Naive thymus-derived CD4-positive, alpha-beta T cell (primary cell): ENCODE measurements at regions of chr6 and their contacts with region 1.

Region 1: GRCh38 chr6:7615611-7616383 is 25.8 kb downstream of the SNRNP48 start:
- DNase-seq: peak in 7 of 9 donors; percentile 8 to 57 (median 46)
- ATAC-seq: peak; percentile 51
- H3K4me3 ChIP-seq: no peak overlapping the region
- H3K4me3 Mint-ChIP-seq: peak overlapping the region in 8 of 10 donors; percentile 6 to 65 (median 50)
- H3K27ac ChIP-seq: no peak overlapping the region
- H3K27ac Mint-ChIP-seq: peak overlapping the region in 5 of 9 donors; percentile 0 to 65 (median 11)
- H3K4me1 ChIP-seq: no peaks in the 10 kb centered on the region
- H3K4me1 Mint-ChIP-seq: peaks cover 8 to 20% (median 11%) of the 10 kb centered on the region in 7 donors
- H3K27me3 ChIP-seq: no peaks in the 10 kb centered on the region
- H3K27me3 Mint-ChIP-seq: peaks cover 0 to 4% (median 0%) of the 10 kb centered on the region in 5 donors

Region 2: GRCh38 chr6:5995949-5996713 is 1619.7 kb before region 1 on chr6:
- CTCF ChIA-PET with region 1: no interaction called
- POLR2A ChIA-PET with region 1: no interaction called
- intact Hi-C with region 1: no loop called
- DNase-seq: peak in 1 of 9 donors; percentile 29
- ATAC-seq: no peak
- H3K4me3 ChIP-seq: peak overlapping the region; percentile 84
- H3K4me3 Mint-ChIP-seq: peak overlapping the region; percentile 87 to 93 (median 90)
- H3K27ac ChIP-seq: no peak overlapping the region
- H3K27ac Mint-ChIP-seq: peak overlapping the region in 8 of 9 donors; percentile 15 to 86 (median 64)
- H3K4me1 ChIP-seq: peaks cover 27 to 53% of the 10 kb centered on the region in 2 donors
- H3K4me1 Mint-ChIP-seq: peaks cover 48 to 69% (median 58%) of the 10 kb centered on the region in 7 donors
- H3K27me3 ChIP-seq: peaks cover 44 to 80% of the 10 kb centered on the region in 2 donors
- H3K27me3 Mint-ChIP-seq: peaks cover 86 to 95% (median 93%) of the 10 kb centered on the region in 5 donors

Region 3: GRCh38 chr6:6556738-6557505 is 1058.9 kb before region 1 on chr6:
- CTCF ChIA-PET with region 1: no interaction called
- POLR2A ChIA-PET with region 1: no interaction called
- intact Hi-C with region 1: loop called in 1 of 2 experiments (anchors 5 kb)
- DNase-seq: peak in 7 of 9 donors; percentile 30 to 68 (median 57)
- ATAC-seq: peak; percentile 76
- H3K4me3 ChIP-seq: no peak overlapping the region
- H3K4me3 Mint-ChIP-seq: no peak overlapping the region
- H3K27ac ChIP-seq: no peak overlapping the region
- H3K27ac Mint-ChIP-seq: peak overlapping the region in 5 of 9 donors; percentile 19 to 64 (median 32)
- H3K4me1 ChIP-seq: peaks cover 0 to 4% of the 10 kb centered on the region in 2 donors
- H3K4me1 Mint-ChIP-seq: peaks cover 0 to 50% (median 18%) of the 10 kb centered on the region in 7 donors
- H3K27me3 ChIP-seq: no peaks in the 10 kb centered on the region
- H3K27me3 Mint-ChIP-seq: peaks cover 0 to 15% (median 0%) of the 10 kb centered on the region in 5 donors

Region 4: GRCh38 chr6:6724539-6725467 is 891.0 kb before region 1 on chr6:
- CTCF ChIA-PET with region 1: interaction called, 8 read pairs
- POLR2A ChIA-PET with region 1: no interaction called
- intact Hi-C with region 1: loop called in 1 of 2 experiments (anchors 1 kb)
- DNase-seq: peak; percentile 33 to 74 (median 62)
- ATAC-seq: peak; percentile 82
- H3K4me3 ChIP-seq: peak overlapping the region; percentile 44
- H3K4me3 Mint-ChIP-seq: peak overlapping the region; percentile 67 to 89 (median 81)
- H3K27ac ChIP-seq: no peak overlapping the region
- H3K27ac Mint-ChIP-seq: peak overlapping the region; percentile 47 to 84 (median 74)
- H3K4me1 ChIP-seq: peaks cover 0 to 5% of the 10 kb centered on the region in 2 donors
- H3K4me1 Mint-ChIP-seq: peaks cover 6 to 28% (median 12%) of the 10 kb centered on the region in 7 donors
- H3K27me3 ChIP-seq: no peaks in the 10 kb centered on the region
- H3K27me3 Mint-ChIP-seq: peaks cover 0 to 43% (median 0%) of the 10 kb centered on the region in 5 donors

Region 5: DNA sequence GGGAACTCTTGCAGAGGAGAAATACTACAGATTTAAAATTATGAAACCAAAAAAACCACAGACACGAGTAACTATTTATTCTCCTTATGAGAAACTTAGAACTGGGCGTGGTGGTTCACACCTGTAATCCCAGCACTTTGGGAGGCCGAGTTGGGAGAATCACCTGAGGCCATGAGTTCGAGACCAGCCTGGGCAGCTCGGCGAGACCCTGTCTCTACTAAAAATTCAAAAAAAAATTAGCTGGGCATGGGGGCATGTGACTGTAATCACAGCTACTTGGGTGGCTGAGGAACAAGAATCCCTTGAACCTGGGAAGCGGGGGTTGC is 339.6 kb before region 1 on chr6:
- CTCF ChIA-PET with region 1: interaction called, 50 read pairs
- POLR2A ChIA-PET with region 1: no interaction called
- intact Hi-C with region 1: loop called (anchors 1 kb)
- DNase-seq: no peak
- ATAC-seq: no peak
- H3K4me3 ChIP-seq: no peak overlapping the region
- H3K4me3 Mint-ChIP-seq: no peak overlapping the region
- H3K27ac ChIP-seq: no peak overlapping the region
- H3K27ac Mint-ChIP-seq: peak overlapping the region in 1 of 9 donors; percentile 56
- H3K4me1 ChIP-seq: no peaks in the 10 kb centered on the region
- H3K4me1 Mint-ChIP-seq: peaks cover 6 to 13% (median 10%) of the 10 kb centered on the region in 7 donors
- H3K27me3 ChIP-seq: no peaks in the 10 kb centered on the region
- H3K27me3 Mint-ChIP-seq: no peaks in the 10 kb centered on the region

Region 6: GRCh38 chr6:7414811-7415210 is 201.0 kb before region 1 on chr6:
- CTCF ChIA-PET with region 1: no interaction called
- POLR2A ChIA-PET with region 1: no interaction called
- intact Hi-C with region 1: loop called in 1 of 2 experiments (anchors 10 kb)
- DNase-seq: no peak
- ATAC-seq: no peak
- H3K4me3 ChIP-seq: no peak overlapping the region
- H3K4me3 Mint-ChIP-seq: no peak overlapping the region
- H3K27ac ChIP-seq: no peak overlapping the region
- H3K27ac Mint-ChIP-seq: peak overlapping the region in 1 of 9 donors; percentile 54
- H3K4me1 ChIP-seq: no peaks in the 10 kb centered on the region
- H3K4me1 Mint-ChIP-seq: peaks cover 0 to 9% (median 0%) of the 10 kb centered on the region in 7 donors
- H3K27me3 ChIP-seq: no peaks in the 10 kb centered on the region
- H3K27me3 Mint-ChIP-seq: no peaks in the 10 kb centered on the region

Region 7: DNA sequence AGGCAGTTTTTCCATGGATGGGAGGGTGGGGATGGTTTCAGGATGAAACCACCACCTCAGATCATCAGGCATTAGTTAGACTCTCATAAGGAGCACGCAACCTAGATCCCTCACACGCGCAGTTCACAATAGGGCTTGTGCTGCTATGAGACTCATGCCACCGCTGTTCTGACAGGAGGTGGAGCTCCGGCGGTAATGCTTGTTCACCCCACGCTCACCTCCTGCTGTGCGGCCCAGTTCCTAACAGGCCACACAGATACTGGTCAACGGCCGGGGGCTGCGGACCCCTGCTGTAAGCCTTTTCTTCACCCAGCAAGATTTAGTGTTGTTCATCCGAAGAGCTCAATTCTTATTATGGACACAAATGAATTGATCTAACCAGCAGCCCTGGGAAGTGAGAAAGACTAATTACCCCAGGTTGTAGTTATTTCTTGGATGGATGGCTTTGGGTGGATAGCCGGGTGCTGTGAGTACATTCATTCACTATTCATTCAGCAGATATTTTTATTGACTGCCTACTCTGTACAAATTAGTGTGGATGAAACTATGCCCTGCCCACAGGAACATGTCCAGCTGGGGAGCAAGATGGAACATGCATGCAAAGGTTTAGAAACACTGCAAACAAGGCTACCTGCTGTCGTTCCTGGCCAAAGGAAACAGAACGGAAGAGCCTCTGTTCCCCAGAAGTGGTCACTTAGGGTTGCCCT is 169.0 kb before region 1 on chr6:
- CTCF ChIA-PET with region 1: no interaction called
- POLR2A ChIA-PET with region 1: no interaction called
- intact Hi-C with region 1: no loop called
- DNase-seq: no peak
- ATAC-seq: no peak
- H3K4me3 ChIP-seq: no peak overlapping the region
- H3K4me3 Mint-ChIP-seq: no peak overlapping the region
- H3K27ac ChIP-seq: no peak overlapping the region
- H3K27ac Mint-ChIP-seq: no peak overlapping the region
- H3K4me1 ChIP-seq: no peaks in the 10 kb centered on the region
- H3K4me1 Mint-ChIP-seq: no peaks in the 10 kb centered on the region
- H3K27me3 ChIP-seq: no peaks in the 10 kb centered on the region
- H3K27me3 Mint-ChIP-seq: peaks cover 0 to 16% (median 7%) of the 10 kb centered on the region in 5 donors

Region 8: DNA sequence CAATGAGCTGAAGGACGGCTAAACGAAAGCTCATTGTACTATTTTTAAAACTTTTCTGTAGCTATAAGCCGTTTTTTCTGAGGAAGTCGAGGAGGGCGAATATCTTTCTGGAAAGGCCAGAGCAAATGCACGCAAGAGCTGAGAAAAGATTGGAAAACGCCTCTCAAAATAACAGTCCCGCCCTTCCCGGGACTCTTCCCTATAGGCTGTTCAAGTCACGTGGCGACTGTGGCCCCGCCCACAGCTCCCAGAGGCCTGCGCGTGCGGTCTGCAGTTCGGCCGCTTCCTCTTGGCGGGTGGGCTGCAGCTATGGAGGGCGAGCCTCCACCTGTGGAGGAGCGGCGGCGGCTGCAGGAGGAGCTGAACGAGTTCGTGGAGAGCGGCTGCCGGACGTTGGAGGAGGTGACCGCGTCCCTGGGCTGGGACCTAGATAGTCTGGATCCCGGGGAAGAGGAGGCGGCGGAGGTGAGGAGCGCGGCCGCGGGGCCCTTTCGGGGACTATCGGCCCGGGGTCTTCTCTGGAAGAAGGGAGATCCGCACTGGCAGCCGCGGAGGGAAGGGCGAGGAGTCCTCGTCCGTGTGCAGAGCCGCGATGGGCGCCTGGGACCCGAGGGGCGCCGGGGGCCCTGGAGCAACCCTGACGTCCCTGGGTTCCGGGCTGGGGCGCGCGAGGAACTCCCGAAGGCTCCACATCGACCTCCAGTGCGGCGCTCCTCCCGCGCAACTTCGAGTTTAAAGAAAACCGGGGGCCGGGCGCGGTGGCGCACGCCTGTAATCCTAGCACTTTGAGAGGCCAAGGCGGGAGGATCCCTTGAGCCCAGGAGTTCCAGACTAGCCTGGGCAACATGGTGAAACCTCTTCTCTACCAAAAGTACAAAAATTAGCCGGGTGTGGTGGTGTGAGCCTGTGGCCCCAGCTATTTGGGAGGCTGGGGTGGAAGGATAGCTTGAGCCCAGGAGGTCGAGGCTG is 25.6 kb before region 1 on chr6 and contains the start of gene SNRNP48:
- CTCF ChIA-PET with region 1: no interaction called
- POLR2A ChIA-PET with region 1: no interaction called
- intact Hi-C with region 1: loop called in 1 of 2 experiments (anchors 2 kb)
- DNase-seq: peak; percentile 83 to 93 (median 88)
- ATAC-seq: peak; percentile 99
- H3K4me3 ChIP-seq: peak within 1 kb of the TSS; percentile 89
- H3K4me3 Mint-ChIP-seq: peak within 1 kb of the TSS; percentile 93 to 100 (median 99)
- H3K27ac ChIP-seq: peak within 1 kb of the TSS; percentile 77
- H3K27ac Mint-ChIP-seq: peak within 1 kb of the TSS; percentile 90 to 97 (median 94)
- H3K4me1 ChIP-seq: peaks cover 12 to 17% of the 10 kb centered on the region in 2 donors
- H3K4me1 Mint-ChIP-seq: peaks cover 28 to 62% (median 54%) of the 10 kb centered on the region in 7 donors
- H3K27me3 ChIP-seq: no peaks in the 10 kb centered on the region
- H3K27me3 Mint-ChIP-seq: peaks cover 0 to 2% (median 0%) of the 10 kb centered on the region in 5 donors
- total RNA-seq, gene SNRNP48: 8.6 to 30.4 (median 15.3) TPM

Region 9: DNA sequence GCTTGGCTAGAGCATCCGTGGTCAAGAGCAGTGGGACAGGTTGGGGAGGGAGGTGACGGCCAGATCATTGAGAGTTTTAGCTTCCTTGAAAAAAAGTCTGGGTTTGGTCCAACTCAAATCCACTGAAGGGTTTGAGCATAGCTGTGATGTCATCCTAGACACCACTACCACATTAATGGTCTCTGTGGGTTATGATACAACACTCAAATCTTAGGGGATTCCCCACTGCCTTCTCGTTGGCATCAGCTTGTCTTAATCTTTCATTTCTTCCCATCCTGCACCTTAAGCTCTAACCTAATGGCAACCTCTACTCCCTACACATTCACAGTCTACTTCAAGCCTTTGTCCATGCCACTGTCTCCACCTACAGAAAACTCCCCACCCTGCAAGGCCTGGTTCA is 187.4 kb after region 1 on chr6:
- CTCF ChIA-PET with region 1: no interaction called
- POLR2A ChIA-PET with region 1: no interaction called
- intact Hi-C with region 1: no loop called
- DNase-seq: no peak
- ATAC-seq: peak; percentile 20
- H3K4me3 ChIP-seq: no peak overlapping the region
- H3K4me3 Mint-ChIP-seq: no peak overlapping the region
- H3K27ac ChIP-seq: no peak overlapping the region
- H3K27ac Mint-ChIP-seq: no peak overlapping the region
- H3K4me1 ChIP-seq: no peaks in the 10 kb centered on the region
- H3K4me1 Mint-ChIP-seq: peaks cover 0 to 3% (median 0%) of the 10 kb centered on the region in 7 donors
- H3K27me3 ChIP-seq: no peaks in the 10 kb centered on the region
- H3K27me3 Mint-ChIP-seq: peaks cover 0 to 28% (median 9%) of the 10 kb centered on the region in 5 donors

Region 10: GRCh38 chr6:8006208-8006607 is 390.4 kb after region 1 on chr6:
- CTCF ChIA-PET with region 1: no interaction called
- POLR2A ChIA-PET with region 1: no interaction called
- intact Hi-C with region 1: loop called in 1 of 2 experiments (anchors 1 kb)
- DNase-seq: peak in 1 of 9 donors; percentile 2
- ATAC-seq: no peak
- H3K4me3 ChIP-seq: no peak overlapping the region
- H3K4me3 Mint-ChIP-seq: no peak overlapping the region
- H3K27ac ChIP-seq: no peak overlapping the region
- H3K27ac Mint-ChIP-seq: no peak overlapping the region
- H3K4me1 ChIP-seq: no peaks in the 10 kb centered on the region
- H3K4me1 Mint-ChIP-seq: peaks cover 0 to 12% (median 4%) of the 10 kb centered on the region in 7 donors
- H3K27me3 ChIP-seq: no peaks in the 10 kb centered on the region
- H3K27me3 Mint-ChIP-seq: peaks cover 0 to 4% (median 0%) of the 10 kb centered on the region in 5 donors